ENCODE measurements at regions of chr12 and their contacts with region 1.

Region 1: DNA sequence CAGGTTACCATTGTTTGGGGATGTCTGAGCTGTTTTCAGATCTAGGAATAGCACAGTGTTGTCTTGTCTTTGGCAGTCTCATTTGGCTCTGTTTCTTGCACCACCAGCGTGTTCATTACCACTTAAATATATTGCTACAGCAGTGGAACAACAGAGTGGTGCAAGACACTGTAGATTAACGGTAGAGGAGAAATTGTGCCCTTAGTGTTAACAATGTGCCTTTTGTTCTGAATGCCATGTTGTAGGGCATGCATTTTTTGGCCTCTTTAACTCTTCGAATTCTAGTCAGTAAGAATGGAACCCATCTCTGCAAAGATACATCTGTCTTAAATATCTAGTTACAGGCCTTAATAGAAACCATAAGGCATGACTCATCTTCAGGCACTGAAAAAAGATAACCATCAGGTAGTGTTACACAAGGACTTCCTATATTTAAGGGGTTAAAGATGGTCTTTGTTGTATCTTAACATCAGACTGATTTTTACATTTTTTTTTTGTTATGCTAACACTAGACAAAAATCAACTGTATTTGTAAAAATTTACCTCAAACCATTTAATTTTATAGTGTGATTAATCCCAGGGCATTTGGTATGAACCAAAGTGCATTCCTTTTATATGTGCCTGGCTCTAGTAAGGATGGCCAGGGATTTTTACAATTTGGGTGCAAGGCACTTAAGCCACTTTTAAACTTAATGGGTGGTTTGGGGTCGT is 12.9 kb downstream of the DYRK2 start:
- DNase-seq: no peak
- ATAC-seq: peak; percentile 56 to 71 (median 57)
- H3K4me3 ChIP-seq: no peak overlapping the region
- H3K27ac ChIP-seq: peak overlapping the region in 6 of 12 donors; percentile 1 to 76 (median 38)
- H3K4me1 ChIP-seq: peaks cover 2 to 95% (median 77%) of the 10 kb centered on the region in 12 donors
- H3K27me3 ChIP-seq: no peaks in the 10 kb centered on the region
- CTCF ChIP-seq: no peak
- POLR2A ChIP-seq: no peak

Region 2: DNA sequence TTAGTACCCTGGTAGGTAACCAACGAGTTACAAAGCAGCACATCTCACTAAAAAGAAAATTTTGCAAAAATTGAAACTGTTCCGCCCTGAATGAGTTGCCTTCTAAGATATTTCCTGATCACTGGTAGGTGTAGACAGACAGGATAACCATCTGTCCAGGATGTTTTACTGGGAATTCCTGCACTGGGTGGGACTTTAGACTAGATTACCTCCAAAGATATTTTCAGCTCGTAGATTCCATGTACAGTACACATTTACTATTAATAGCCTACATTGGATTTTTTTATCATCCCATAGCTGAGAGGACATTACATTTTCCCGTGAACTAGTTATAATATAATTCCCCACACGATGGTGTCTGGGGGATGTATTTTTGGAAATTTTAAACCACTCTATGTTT is 126.7 kb after region 1 on chr12:
- intact Hi-C with region 1: loop called in 2 of 10 experiments (anchors 10 kb)
- DNase-seq: no peak
- ATAC-seq: peak; percentile 55 to 72 (median 66)
- H3K4me3 ChIP-seq: no peak overlapping the region
- H3K27ac ChIP-seq: peak overlapping the region in 1 of 12 donors; percentile 31
- H3K4me1 ChIP-seq: peaks cover 0 to 25% (median 11%) of the 10 kb centered on the region in 12 donors
- H3K27me3 ChIP-seq: no peaks in the 10 kb centered on the region
- CTCF ChIP-seq: peak in 1 of 12 donors; percentile 13
- POLR2A ChIP-seq: no peak

Measured in heart left ventricle (tissue), 16 donors.